BJ (cell line): ENCODE measurements at regions of chr11 and their contacts with region 1.

Region 1: GRCh38 chr11:18419040-18419439 is 6.9 kb downstream of the LDHC start:
- DNase-seq: no peak
- H3K4me3 ChIP-seq: no peak overlapping the region
- H3K27me3 ChIP-seq: no peaks in the 10 kb centered on the region
- CTCF ChIP-seq: no peak

Region 2: DNA sequence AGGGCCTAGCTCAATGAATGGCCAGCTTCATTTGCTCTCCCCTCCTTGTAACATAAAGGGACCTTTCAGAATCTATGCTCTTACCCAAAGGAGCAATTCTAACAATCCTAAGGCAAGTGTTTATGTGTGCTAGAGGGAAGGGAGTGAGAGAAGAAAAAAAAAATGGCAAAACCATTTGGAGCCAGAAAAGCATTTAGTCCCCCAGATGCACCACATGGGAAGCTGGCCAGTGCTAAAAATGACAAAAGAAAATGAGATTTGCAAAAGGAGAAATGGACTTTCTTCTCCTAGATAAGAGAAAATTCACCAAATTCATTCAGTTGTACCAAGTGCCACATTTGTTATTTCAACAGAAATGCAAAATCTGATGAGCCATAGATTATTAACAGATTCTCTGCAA is 458.9 kb before region 1 on chr11:
- CTCF ChIA-PET with region 1: no interaction called
- POLR2A ChIA-PET with region 1: no interaction called
- DNase-seq: no peak
- H3K4me3 ChIP-seq: no peak overlapping the region
- H3K27me3 ChIP-seq: no peaks in the 10 kb centered on the region
- CTCF ChIP-seq: no peak

Region 3: DNA sequence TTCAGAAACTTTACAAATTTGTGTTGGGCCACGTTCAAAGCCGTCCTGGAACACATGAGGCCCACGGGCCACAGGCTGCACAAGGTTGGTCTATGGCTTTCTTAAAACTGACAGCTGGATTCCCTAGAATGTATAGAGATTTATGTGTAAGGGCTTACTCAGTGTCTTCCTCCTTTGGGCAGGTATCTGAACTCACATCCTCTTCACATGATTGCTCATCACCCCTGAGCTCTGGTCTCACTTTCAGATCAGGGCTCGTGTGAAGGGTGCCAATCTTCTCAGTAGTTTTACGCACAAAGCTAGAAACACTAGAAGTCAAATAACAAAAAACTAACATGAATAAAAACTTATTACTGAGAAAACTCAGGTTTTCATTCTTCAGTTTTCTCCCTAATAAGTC is 124.2 kb before region 1 on chr11:
- CTCF ChIA-PET with region 1: no interaction called
- POLR2A ChIA-PET with region 1: no interaction called
- DNase-seq: no peak
- H3K4me3 ChIP-seq: no peak overlapping the region
- H3K27me3 ChIP-seq: no peaks in the 10 kb centered on the region
- CTCF ChIP-seq: no peak

Region 4: GRCh38 chr11:18383388-18384156 is 35.5 kb before region 1 on chr11:
- CTCF ChIA-PET with region 1: no interaction called
- POLR2A ChIA-PET with region 1: no interaction called
- DNase-seq: peak; percentile 97
- H3K4me3 ChIP-seq: no peak overlapping the region
- H3K27me3 ChIP-seq: no peaks in the 10 kb centered on the region
- CTCF ChIP-seq: no peak

Region 5: DNA sequence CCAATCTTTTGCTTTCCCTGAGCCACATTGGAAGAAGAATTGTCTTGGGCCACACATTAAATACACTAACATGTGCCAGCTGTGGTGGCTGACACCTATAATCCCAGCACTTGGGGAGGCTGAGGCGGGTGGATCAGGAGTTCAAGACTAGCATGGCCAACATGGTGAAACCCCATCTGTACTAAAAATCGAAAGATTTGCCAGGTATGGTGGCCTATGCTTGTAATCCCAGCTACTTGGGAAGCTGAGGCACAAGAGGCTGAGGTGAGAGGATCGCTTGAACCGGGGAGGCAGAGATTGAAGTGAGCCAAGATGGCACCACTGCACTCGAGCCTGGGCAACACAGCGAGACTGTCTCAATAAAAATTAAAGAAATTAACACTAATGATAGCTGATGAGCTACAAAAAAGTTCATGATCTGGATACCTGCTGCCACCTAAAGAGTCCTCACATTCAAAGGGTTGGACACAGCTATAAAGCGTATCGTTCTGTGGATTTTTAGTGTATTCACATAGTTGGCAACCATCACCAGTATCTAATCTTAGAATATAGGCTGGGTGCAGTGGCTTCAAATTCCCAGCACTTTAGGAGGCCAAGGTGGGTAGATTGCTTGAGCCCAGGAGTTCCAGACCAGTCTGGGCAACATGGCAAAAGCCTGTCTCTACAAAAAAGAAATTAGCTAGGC is 10.3 kb before region 1 on chr11:
- CTCF ChIA-PET with region 1: interaction called, 12 read pairs
- POLR2A ChIA-PET with region 1: no interaction called
- DNase-seq: no peak
- H3K4me3 ChIP-seq: no peak overlapping the region
- H3K27me3 ChIP-seq: no peaks in the 10 kb centered on the region
- CTCF ChIP-seq: no peak